HepG2 (cell line): ENCODE measurements at regions of chr11 and their contacts with region 1.

Region 1: GRCh38 chr11:59550368-59550841 is 39.1 kb downstream of the OR4D9 start:
- DNase-seq: peak; percentile 94
- ATAC-seq: peak; percentile 96
- H3K4me3 ChIP-seq: peak overlapping the region; percentile 62 to 72 (median 72)
- H3K27ac ChIP-seq: peak overlapping the region; percentile 79
- H3K4me1 ChIP-seq: peaks cover 29% of the 10 kb centered on the region
- H3K27me3 ChIP-seq: no peaks in the 10 kb centered on the region; a peak in 2 of 5 replicates
- CTCF ChIP-seq: peak; percentile 64
- EP300 ChIP-seq: 0 out of 4 replicates have a peak, but pooled peaks of 1 of the 2 experiments have one; percentile 10
- POLR2A ChIP-seq: no peak
- RAD21 ChIP-seq: peak; percentile 32; the same call in 1 of the 2 replicates

Region 2: DNA sequence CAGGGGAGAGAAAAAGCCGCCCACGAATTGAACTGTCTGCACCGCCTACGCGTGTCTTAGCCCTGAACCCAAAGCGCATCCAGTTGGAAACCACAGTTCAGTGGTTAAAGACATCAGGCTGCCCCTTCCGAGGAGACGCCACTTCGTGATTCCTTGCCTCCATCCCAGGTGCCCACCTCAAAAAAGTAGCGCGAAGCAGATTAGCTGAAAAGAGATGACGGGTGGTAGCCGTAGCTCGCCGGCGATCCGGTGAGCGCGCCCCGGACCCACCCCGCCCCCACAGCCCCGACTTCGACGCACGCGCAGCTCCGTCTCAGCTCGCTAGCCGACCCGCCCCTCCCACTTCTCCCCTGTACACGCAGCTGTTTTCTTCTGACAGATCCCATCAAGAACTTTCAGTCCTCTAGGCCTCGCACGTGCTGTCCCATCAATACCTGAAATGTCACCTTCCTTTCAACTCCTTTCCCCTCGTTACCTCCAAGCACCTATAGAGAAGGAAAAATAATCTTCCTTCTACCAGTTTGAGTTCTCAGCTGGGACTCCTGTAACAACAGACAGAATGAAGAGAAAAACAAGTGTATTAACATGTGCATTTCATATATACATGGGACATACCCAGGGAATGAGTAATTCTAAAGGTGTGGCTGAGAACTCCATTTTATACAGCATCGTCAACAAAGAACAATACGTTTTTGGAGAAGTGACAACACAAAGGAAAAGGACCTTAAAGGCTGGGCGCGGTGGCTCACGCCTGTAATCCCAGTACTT is 10.5 kb after region 1 on chr11:
- CTCF ChIA-PET with region 1: no interaction called
- POLR2A ChIA-PET with region 1: interaction called, 11 read pairs
- in situ Hi-C with region 1: no loop called
- intact Hi-C with region 1: loop called (anchors 1 kb)
- DNase-seq: peak; percentile 77
- ATAC-seq: peak; percentile 42
- H3K4me3 ChIP-seq: peak overlapping the region; percentile 86 to 96 (median 92)
- H3K27ac ChIP-seq: peak overlapping the region; percentile 48
- H3K4me1 ChIP-seq: peaks cover 47% of the 10 kb centered on the region
- H3K27me3 ChIP-seq: no peaks in the 10 kb centered on the region; a peak in 1 of 5 replicates
- CTCF ChIP-seq: no peak
- EP300 ChIP-seq: no peak
- POLR2A ChIP-seq: no peak
- RAD21 ChIP-seq: no peak

Region 3: GRCh38 chr11:59574467-59574866 is 24.1 kb after region 1 on chr11:
- CTCF ChIA-PET with region 1: no interaction called
- POLR2A ChIA-PET with region 1: no interaction called
- in situ Hi-C with region 1: no loop called
- intact Hi-C with region 1: no loop called
- DNase-seq: no peak
- ATAC-seq: no peak
- H3K4me3 ChIP-seq: no peak overlapping the region
- H3K27ac ChIP-seq: no peak overlapping the region
- H3K4me1 ChIP-seq: peaks cover 12% of the 10 kb centered on the region; the same call in 1 of the 2 replicates
- H3K27me3 ChIP-seq: no peaks in the 10 kb centered on the region
- CTCF ChIP-seq: no peak
- EP300 ChIP-seq: no peak
- POLR2A ChIP-seq: no peak
- RAD21 ChIP-seq: no peak

Region 4: DNA sequence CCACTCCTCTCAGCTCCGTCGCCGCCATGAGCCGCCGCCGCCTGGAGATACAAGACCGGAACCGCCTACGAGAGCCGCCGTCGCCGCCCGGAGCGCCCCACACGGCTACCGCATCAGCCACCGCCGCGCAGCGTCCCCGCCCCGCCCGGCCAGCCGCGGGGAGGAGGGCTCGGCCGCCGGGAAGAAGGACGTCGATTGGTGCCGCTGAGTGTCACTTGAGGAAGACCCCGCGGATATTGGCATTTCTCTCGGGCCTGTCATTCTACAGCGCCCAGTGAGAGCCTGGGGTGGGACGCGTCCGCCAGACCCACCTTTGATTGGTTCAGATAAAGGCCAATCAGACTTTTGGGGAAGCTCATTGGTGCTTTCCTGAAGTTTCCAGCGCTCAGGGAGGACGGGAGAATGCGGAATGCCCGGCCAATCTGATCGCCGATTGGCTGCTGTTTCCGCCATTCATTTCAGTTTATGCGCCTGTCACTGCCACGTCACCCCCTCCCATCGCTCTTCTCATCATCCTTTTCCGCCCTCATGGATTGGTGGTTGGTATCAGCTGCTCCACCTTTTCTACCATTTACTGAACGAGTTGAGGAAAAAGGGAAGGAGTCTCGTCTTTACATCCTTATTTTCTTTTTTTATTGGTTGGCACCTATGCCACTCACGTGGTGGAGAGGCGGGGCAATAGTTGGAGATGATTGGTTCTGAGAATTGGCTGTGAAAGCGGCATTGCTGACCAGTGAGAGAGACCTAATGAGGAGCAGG is 65.4 kb after region 1 on chr11 and contains the start of gene OSBP:
- CTCF ChIA-PET with region 1: no interaction called
- POLR2A ChIA-PET with region 1: interaction called, 8 read pairs
- in situ Hi-C with region 1: no loop called
- intact Hi-C with region 1: loop called (anchors 2 kb)
- DNase-seq: peak; percentile 99
- ATAC-seq: peak; percentile 96
- H3K4me3 ChIP-seq: peak within 1 kb of the TSS; percentile 84 to 93 (median 90)
- H3K27ac ChIP-seq: peak within 1 kb of the TSS; percentile 80
- H3K4me1 ChIP-seq: peaks cover 53% of the 10 kb centered on the region
- H3K27me3 ChIP-seq: no peaks in the 10 kb centered on the region; a peak in 1 of 5 replicates
- CTCF ChIP-seq: no peak
- EP300 ChIP-seq: no peak
- POLR2A ChIP-seq: peak; percentile 40 to 68; a peak in 3 of 4 replicates
- RAD21 ChIP-seq: no peak
- total RNA-seq, gene OSBP: 13.5 and 23.0 TPM in 2 replicates

Region 5: DNA sequence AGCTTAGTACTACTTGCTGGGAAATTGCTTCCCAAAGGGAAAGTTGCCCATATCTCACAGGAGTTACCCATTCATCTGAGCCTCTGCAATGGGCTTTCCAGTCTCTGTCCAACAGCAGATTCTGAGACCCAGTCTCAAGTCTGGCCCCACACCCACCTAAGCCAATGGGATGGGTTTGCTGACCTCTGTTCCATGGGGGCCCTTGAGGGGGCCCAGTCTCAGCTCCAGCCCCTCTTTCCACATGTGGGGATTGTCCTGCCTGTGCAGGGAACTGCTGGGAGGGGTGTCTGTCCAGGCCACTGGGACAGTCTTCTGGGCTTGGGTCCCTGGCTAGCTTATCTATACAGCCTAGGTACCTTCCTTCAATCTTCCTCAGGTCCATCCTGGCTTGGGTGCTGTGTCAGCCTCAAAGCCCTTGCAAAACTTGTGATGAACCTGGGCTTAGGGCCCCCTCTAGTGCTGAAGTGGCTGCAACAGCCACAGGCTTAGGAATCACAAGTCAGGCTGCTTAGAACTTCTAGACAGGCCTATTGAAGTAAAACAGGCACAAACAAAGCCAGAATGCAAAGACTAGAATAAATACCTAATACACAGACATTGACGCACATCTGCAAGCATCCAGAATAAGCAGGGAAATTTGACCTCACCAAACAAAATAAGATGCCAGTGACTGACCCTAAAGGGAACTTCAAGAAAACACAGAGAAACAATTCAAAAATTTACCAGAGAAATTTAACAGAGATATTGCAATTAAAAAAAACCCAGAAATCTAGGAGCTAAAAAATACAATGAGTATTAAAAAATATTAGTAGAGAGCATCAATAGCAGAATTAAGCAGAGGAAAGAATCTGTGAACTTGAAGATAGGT is 130.1 kb after region 1 on chr11:
- CTCF ChIA-PET with region 1: no interaction called
- POLR2A ChIA-PET with region 1: no interaction called
- in situ Hi-C with region 1: no loop called
- intact Hi-C with region 1: loop called (anchors 5 kb)
- DNase-seq: peak; percentile 73
- ATAC-seq: peak; percentile 99
- H3K4me3 ChIP-seq: no peak overlapping the region
- H3K27ac ChIP-seq: no peak overlapping the region
- H3K4me1 ChIP-seq: peaks cover 38% of the 10 kb centered on the region
- H3K27me3 ChIP-seq: no peaks in the 10 kb centered on the region
- CTCF ChIP-seq: peak; percentile 94
- EP300 ChIP-seq: no peak
- POLR2A ChIP-seq: no peak
- RAD21 ChIP-seq: peak; percentile 85

Region 6: DNA sequence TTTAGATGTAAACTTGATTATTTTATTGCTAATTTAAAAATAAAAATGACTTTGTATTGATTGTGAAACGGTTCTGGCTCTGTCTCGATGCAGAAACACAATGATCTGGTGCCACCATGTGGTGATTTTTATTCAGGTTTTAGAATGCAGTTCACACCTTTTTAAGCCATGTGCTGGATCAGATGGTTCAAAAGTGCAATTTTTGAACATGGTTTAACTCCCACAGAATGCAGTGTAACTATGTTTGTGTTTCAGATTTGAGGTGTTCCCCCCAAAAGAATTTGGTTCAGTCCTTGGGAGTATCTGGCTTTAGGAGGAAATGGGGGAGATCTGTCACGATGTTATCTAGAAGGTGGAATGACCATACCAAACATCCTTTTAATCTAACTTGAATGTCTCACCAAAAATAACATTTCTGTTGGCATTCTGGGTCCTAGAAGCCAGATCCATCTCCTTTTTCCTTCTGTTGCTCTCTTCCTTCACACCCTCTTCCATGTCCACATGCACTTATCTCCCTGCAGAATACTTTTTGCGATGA is 252.3 kb after region 1 on chr11:
- CTCF ChIA-PET with region 1: no interaction called
- POLR2A ChIA-PET with region 1: no interaction called
- in situ Hi-C with region 1: no loop called
- intact Hi-C with region 1: loop called (anchors 5 kb)
- DNase-seq: peak; percentile 51
- ATAC-seq: peak; percentile 76
- H3K4me3 ChIP-seq: no peak overlapping the region
- H3K27ac ChIP-seq: no peak overlapping the region
- H3K4me1 ChIP-seq: peaks cover 11% of the 10 kb centered on the region
- H3K27me3 ChIP-seq: no peaks in the 10 kb centered on the region
- CTCF ChIP-seq: peak; percentile 77
- EP300 ChIP-seq: no peak
- POLR2A ChIP-seq: no peak
- RAD21 ChIP-seq: peak; percentile 77